ENCODE measurements at regions of chr5 and their contacts with region 1.

Region 1: GRCh38 chr5:143685246-143685802 is 126.6 kb upstream of the HMHB1 start:
- DNase-seq: no peak
- ATAC-seq: peak; percentile 34
- H3K4me3 ChIP-seq: no peak overlapping the region
- H3K27ac ChIP-seq: no peak overlapping the region
- H3K4me1 ChIP-seq: no peaks in the 10 kb centered on the region
- H3K27me3 ChIP-seq: no peaks in the 10 kb centered on the region
- CTCF ChIP-seq: peak in 1 of 2 donors; percentile 13

Region 2: DNA sequence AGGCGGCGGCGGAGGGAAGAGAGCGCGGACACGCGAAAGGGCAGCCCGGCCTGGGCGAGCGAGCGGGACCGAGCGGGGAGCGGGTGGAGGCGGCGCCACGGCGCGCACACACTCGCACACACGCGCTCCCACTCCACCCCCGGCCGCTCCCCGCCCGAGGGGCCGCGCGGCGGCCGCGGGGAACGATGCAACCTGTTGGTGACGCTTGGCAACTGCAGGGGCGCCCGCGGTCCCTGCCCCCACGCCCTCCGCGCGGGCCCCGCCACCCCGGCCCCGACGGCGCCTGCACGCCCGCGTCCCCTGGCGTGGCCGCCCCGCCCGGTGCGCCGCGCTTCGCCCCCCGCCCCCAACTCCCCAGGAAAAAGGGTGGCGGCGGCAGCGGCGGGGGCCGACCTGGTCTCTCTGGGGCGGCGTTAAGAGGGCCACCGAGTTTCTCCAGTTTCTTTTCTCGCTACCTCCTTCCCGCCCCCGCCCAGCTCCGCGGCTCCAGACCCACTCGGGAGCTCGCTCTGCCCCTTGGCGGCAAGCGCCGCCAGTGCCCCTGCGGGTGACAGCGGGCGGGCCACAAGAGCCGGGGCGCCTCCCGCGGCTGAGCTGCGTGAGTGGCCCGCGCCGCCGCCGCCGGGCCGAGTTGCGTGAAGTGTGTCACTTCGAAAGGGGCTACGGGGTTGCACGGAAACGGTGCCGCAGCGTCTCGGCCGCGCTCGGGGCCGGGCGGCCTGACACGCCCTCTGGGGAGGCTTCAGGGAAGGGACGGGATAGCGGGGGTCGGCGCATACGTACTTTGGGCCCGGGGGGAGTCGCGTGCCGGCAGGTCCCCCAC is 281.5 kb before region 1 on chr5 and contains the start of gene NR3C1:
- intact Hi-C with region 1: loop called in 1 of 2 experiments (anchors 10 kb)
- DNase-seq: peak; percentile 83 to 97 (median 90)
- ATAC-seq: peak; percentile 77
- H3K4me3 ChIP-seq: peak within 1 kb of the TSS; percentile 64 to 80
- H3K27ac ChIP-seq: peak within 1 kb of the TSS; percentile 100
- H3K4me1 ChIP-seq: peaks cover 16 to 32% of the 10 kb centered on the region in 2 donors
- H3K27me3 ChIP-seq: no peaks in the 10 kb centered on the region
- CTCF ChIP-seq: peak; percentile 42 to 72
- polyA plus RNA-seq, gene NR3C1: 59.2 to 71.6 (median 64.0) TPM

Region 3: GRCh38 chr5:143850050-143850683 is 164.8 kb after region 1 on chr5:
- intact Hi-C with region 1: no loop called
- DNase-seq: no peak
- ATAC-seq: no peak
- H3K4me3 ChIP-seq: no peak overlapping the region
- H3K27ac ChIP-seq: no peak overlapping the region
- H3K4me1 ChIP-seq: no peaks in the 10 kb centered on the region
- H3K27me3 ChIP-seq: no peaks in the 10 kb centered on the region
- CTCF ChIP-seq: no peak

Measured in left lung (tissue), 14 donors.